ENCODE measurements at regions of chr16 and their contacts with region 1.

Region 1: GRCh38 chr16:67806428-67807147 is at the starts of genes RANBP10 and TSNAXIP1:
- DNase-seq: peak; percentile 97 to 99
- H3K4me3 ChIP-seq: peak within 1 kb of the TSS; percentile 87 to 91
- H3K27ac ChIP-seq: peak within 1 kb of the TSS; percentile 70 to 83
- H3K4me1 ChIP-seq: peaks cover 0 to 12% of the 10 kb centered on the region in 2 donors
- H3K27me3 ChIP-seq: no peaks in the 10 kb centered on the region
- CTCF ChIP-seq: no peak
- total RNA-seq, gene RANBP10: 50.0 TPM
- total RNA-seq, gene TSNAXIP1: 5.4 TPM

Region 2: DNA sequence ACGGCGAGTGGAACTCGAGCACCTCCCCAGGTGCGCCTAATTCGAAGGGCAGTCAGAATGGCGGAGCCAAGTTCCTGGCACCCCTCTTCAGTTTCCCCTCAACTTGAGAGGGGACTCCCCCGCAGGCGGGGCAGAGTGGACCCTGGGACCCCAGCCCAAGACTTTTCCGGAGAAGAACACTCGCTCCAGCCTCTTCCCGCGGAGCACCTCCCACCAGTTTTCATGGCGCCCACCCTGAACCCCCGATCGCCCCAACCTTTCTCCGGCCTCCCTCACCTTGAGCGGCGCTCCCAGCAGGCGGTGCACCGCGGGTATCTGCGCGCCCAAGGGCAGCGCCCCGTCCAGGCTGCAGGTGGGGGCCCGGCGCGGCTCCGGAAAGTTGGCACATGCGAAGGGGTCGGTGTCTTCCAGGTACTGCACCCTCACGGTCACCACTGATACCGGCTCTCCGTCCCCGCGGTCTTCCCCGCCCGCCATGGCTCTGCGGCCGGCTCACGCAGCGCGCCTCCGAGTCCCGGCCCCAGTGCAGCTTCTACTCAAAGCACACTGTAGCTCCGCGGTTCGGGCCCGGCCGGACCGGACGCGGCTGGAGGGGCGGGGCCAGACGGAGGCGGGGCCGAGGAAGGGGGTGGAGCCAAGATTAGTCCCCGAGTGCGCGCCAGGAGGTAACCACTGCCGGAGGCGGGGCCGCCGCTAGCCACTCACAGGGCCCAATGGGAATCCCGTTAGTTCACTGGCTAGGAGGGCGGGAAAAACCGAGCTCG is 559.5 kb before region 1 on chr16 and contains the start of gene FHOD1:
- intact Hi-C with region 1: loop called (anchors 10 kb)
- DNase-seq: peak; percentile 94 to 99
- H3K4me3 ChIP-seq: peak within 1 kb of the TSS; percentile 69 to 71
- H3K27ac ChIP-seq: peak within 1 kb of the TSS; percentile 82 to 89
- H3K4me1 ChIP-seq: peaks cover 28 to 31% of the 10 kb centered on the region in 2 donors
- H3K27me3 ChIP-seq: peaks cover 6% of the 10 kb centered on the region
- CTCF ChIP-seq: no peak
- total RNA-seq, gene FHOD1: 20.2 TPM

Region 3: DNA sequence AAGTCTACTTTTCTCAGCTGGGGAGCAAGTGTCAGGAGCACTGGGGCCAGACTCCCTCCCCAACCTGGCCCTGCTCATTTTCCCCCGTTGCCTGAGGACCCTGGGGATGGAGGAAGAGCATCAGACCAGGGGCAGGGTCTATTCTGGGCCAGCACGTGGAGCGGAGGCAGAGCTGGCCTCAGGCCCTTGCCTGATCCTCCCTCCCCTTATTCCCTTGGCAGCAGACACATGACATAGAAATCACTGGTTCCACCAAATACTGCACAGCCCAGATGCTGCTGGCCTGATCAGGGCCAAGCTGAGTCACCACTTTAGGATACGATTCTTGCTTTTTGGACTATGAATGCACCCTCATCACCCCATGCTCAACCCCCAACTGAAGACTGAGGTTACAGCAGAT is 307.5 kb before region 1 on chr16:
- intact Hi-C with region 1: no loop called
- DNase-seq: no peak
- H3K4me3 ChIP-seq: no peak overlapping the region
- H3K27ac ChIP-seq: no peak overlapping the region
- H3K4me1 ChIP-seq: no peaks in the 10 kb centered on the region
- H3K27me3 ChIP-seq: no peaks in the 10 kb centered on the region
- CTCF ChIP-seq: no peak

Region 4: DNA sequence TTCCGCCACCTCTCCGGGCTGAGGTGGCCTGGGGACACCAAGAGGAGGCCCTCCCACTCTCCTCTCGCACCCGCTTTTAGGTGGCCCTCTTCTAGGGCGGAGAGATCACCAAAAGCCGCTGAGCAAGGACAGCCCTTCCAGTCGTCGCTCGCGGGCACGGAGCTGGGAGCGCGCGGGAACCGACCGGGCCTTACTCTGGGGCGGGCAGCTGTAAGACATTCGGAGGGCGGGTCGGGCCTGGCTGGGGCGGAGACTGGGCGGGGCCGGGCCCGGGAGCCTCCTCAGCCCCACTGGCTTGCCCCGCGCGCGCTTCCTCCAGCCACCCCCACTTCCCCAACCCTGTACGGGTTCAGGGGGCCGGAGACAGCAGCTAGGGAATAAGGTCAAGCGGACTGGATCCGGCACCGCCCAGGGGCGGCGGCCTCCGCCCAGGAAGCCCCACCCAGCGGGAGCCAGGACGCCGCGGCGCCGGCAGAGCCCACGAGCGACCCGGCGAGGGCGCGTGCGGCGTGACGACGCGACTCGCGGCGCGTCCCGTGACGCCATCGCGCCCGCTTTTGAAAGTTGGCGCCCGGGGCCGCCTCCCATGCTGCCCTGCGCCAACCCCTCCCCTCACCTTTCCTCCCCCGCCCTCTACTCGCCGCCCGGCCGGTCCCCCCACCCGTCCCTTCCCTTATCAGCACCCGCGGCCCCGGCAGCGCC is 244.6 kb before region 1 on chr16:
- intact Hi-C with region 1: loop called (anchors 1 kb)
- DNase-seq: peak; percentile 89 to 97
- H3K4me3 ChIP-seq: peak overlapping the region; percentile 99
- H3K27ac ChIP-seq: peak overlapping the region; percentile 100
- H3K4me1 ChIP-seq: peaks cover 7 to 24% of the 10 kb centered on the region in 2 donors
- H3K27me3 ChIP-seq: no peaks in the 10 kb centered on the region
- CTCF ChIP-seq: no peak

Region 5: GRCh38 chr16:67595033-67595355 is 211.6 kb before region 1 on chr16:
- intact Hi-C with region 1: no loop called
- DNase-seq: peak in 1 of 2 donors; percentile 66
- H3K4me3 ChIP-seq: no peak overlapping the region
- H3K27ac ChIP-seq: peak overlapping the region in 1 of 2 donors; percentile 57
- H3K4me1 ChIP-seq: peaks cover 0 to 16% of the 10 kb centered on the region in 2 donors
- H3K27me3 ChIP-seq: no peaks in the 10 kb centered on the region
- CTCF ChIP-seq: no peak

Region 6: DNA sequence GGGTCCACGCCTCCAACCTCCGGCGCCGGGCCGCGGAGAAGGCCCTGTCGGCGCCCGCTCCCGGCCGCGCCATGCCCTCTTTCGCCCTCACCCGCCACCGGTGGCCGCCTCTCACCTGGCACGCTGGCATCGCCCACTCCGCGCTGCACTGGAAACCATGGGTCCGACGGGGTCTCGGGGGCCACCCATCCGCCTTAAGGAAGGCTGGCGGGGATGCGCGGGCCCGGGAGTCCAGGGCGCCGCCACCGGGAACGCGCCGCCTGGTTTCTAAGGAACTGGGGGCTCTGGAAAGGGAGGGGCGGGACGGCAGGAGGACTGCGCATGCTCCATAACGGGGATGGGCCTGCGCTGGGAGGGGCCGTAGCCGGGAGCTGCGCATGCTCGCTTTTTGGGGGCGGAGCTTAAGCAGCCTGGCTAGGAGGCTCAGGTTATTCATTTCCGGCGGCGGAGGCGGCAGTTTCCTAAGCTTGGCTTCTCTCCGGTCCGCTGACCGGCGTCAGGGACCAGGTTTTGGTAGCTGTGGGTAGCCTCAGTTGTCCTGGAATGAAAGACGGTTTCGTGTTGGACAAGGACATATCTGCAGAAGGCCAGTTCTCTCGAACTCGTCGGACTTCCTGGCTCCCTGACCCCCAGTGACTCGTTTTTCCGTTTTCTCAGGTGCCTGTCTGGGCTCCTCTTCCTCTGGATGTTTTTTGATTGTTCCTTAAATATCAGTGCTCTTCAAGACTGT is 87.4 kb before region 1 on chr16 and contains the start of gene GFOD2:
- intact Hi-C with region 1: loop called (anchors 2 kb)
- DNase-seq: peak; percentile 78 to 98
- H3K4me3 ChIP-seq: peak within 1 kb of the TSS; percentile 87 to 99
- H3K27ac ChIP-seq: peak within 1 kb of the TSS; percentile 87 to 94
- H3K4me1 ChIP-seq: peaks cover 0 to 12% of the 10 kb centered on the region in 2 donors
- H3K27me3 ChIP-seq: no peaks in the 10 kb centered on the region
- CTCF ChIP-seq: no peak
- total RNA-seq, gene GFOD2: 43.5 TPM

Region 7: GRCh38 chr16:67872786-67873537 is 66.4 kb after region 1 on chr16 and contains the start of gene EDC4:
- intact Hi-C with region 1: no loop called
- DNase-seq: peak; percentile 41 to 93
- H3K4me3 ChIP-seq: peak within 1 kb of the TSS; percentile 87 to 91
- H3K27ac ChIP-seq: peak within 1 kb of the TSS; percentile 83 to 86
- H3K4me1 ChIP-seq: peaks cover 0 to 15% of the 10 kb centered on the region in 2 donors
- H3K27me3 ChIP-seq: no peaks in the 10 kb centered on the region
- CTCF ChIP-seq: no peak
- total RNA-seq, gene EDC4: 125 TPM

Region 8: DNA sequence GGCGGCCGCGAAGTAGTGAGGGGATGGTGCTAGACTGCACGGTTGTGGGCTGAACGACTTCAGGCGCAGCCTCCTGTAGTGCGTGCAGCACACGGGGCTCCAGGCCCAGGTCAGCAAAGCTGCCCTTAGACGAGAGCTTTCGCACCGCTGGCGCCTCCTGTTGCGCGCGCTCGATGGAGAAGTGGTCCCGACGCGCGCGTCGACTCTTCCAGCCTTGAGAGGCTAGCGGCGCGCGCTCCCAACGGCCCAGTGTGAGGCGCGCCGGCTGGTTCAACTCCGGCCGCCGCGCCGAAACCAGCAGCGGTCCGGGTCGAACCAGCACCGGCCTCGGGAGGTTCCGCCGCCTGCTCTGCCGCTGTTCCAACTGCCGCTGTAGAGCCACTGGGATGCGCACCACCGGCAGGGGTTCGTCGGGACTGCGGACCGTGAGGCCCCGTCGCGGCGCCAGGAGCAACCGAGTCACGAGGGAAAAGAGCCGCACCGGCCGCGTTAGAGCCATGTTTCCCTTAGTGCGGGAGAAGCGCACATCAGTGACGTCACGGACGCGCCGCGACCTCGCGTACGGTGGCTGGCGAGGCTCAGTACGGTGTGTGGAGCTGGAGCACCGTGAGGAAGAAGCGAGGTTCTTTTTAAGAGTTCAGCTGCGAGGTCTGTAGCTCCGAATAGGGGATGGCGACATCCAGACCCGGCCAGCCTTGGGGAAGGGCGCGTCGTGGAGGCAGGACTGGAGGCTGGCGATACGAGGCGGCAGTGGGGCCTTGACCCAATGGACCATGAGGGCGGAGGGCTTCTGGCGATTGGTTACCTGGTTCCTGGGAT is 216.3 kb after region 1 on chr16 and contains the starts of genes DDX28 and DUS2:
- intact Hi-C with region 1: loop called (anchors 2 kb)
- DNase-seq: peak; percentile 66 to 94
- H3K4me3 ChIP-seq: peak within 1 kb of the TSS; percentile 84 to 87
- H3K27ac ChIP-seq: peak within 1 kb of the TSS; percentile 66 to 87
- H3K4me1 ChIP-seq: peaks cover 8 to 14% of the 10 kb centered on the region in 2 donors
- H3K27me3 ChIP-seq: no peaks in the 10 kb centered on the region
- CTCF ChIP-seq: peak in 1 of 3 experiments; percentile 7
- total RNA-seq, gene DDX28: 3.0 TPM
- total RNA-seq, gene DUS2: 7.6 TPM

Region 9: GRCh38 chr16:68214726-68215125 is 408.1 kb after region 1 on chr16:
- intact Hi-C with region 1: no loop called
- DNase-seq: no peak
- H3K4me3 ChIP-seq: no peak overlapping the region
- H3K27ac ChIP-seq: no peak overlapping the region
- H3K4me1 ChIP-seq: no peaks in the 10 kb centered on the region
- H3K27me3 ChIP-seq: no peaks in the 10 kb centered on the region
- CTCF ChIP-seq: no peak

Measured in ascending aorta (tissue), 2 donors.